Psoas muscle (tissue), 8 donors: ENCODE measurements at regions of chr10 and their contacts with region 1.

Region 1: DNA sequence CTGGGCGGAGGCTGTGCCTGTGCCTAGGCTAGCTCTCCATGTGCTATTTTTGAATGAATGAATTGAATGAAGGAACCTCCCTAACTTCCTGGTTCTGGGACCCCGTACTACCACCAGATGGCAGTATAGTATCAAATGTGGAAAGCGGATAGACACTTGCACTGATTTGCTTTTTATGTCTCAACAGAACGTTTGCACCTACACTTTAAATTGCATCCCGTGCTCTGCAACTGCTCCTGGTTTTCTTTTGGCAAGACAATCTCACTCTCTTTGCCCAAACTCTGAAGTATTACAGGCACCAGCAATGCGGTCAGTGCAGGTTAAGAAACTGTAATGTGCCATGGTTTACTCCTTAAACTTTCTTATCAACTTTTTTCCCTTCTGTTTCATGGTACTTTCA is 6.5 kb downstream of the FZD8 start:
- DNase-seq: no peak
- ATAC-seq: peak; percentile 66 to 85 (median 76)
- H3K4me3 ChIP-seq: no peak overlapping the region
- H3K27ac ChIP-seq: no peak overlapping the region
- H3K4me1 ChIP-seq: peaks cover 5% of the 10 kb centered on the region
- H3K27me3 ChIP-seq: no peaks in the 10 kb centered on the region
- CTCF ChIP-seq: peak; percentile 97

Region 2: DNA sequence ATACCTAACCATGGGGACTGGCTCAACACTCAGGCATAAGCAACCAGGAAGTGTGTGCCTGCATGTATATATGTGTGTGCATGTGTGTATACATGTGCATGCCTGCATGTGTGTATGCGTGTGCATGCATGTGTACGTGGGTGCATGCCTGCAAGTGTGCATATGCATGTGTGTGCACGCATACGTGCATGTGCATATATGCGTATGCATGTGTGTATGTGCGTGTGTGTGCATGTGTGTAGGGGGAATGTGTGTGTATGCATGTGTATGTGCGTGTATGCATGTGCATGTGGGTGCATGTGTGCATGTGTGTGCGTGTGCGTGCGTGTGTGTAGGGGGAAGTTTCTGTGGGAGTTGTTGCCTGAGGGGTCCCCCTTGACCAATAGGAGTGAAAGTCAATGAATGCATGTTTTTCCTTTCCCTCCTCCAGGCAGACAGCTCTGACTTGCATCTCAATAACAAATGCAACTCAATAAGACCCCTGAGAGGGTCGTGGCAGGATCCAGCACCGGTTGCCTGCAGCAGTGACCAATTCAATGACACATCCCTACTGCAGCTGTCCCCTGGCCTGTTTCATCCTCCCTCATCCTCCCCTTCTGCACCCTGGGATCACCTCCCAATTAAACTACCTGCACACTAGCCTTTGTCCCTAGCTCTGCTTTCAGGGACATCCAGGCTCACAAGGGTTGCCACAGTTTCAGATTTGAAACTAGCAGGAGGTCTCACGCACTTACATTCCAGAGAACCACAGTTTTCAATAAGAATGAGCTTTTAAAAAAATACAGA is 33.5 kb after region 1 on chr10:
- intact Hi-C with region 1: no loop called
- DNase-seq: no peak
- ATAC-seq: no peak
- H3K4me3 ChIP-seq: no peak overlapping the region
- H3K27ac ChIP-seq: no peak overlapping the region
- H3K4me1 ChIP-seq: no peaks in the 10 kb centered on the region
- H3K27me3 ChIP-seq: no peaks in the 10 kb centered on the region
- CTCF ChIP-seq: no peak

Region 3: GRCh38 chr10:36779234-36779846 is 1143.8 kb after region 1 on chr10:
- intact Hi-C with region 1: loop called (anchors 2 kb)
- DNase-seq: no peak
- ATAC-seq: peak; percentile 64 to 77 (median 68)
- H3K4me3 ChIP-seq: no peak overlapping the region
- H3K27ac ChIP-seq: no peak overlapping the region
- H3K4me1 ChIP-seq: no peaks in the 10 kb centered on the region
- H3K27me3 ChIP-seq: no peaks in the 10 kb centered on the region
- CTCF ChIP-seq: peak; percentile 70

Region 4: DNA sequence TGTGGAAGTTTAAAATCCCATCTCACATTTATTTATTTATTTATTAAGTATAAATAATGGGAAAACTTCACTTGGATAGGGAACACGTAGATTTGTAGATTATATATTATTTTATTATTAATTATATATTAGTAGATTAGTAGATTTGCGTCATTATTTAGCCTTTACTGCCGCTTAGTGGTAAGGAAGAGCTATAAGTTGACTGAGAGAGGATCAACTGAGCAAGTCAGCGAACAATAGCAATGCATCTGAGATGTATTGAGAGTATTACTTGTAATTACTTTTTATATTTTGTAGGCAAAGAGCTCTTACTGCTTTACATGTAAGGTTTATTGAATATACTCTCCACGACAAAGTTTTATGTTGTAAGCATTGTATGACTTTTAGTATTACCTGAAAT is 1245.3 kb after region 1 on chr10:
- intact Hi-C with region 1: loop called (anchors 5 to 10 kb)
- DNase-seq: no peak
- ATAC-seq: no peak
- H3K4me3 ChIP-seq: no peak overlapping the region
- H3K27ac ChIP-seq: no peak overlapping the region
- H3K4me1 ChIP-seq: no peaks in the 10 kb centered on the region
- H3K27me3 ChIP-seq: no peaks in the 10 kb centered on the region
- CTCF ChIP-seq: peak; percentile 37

Region 5: DNA sequence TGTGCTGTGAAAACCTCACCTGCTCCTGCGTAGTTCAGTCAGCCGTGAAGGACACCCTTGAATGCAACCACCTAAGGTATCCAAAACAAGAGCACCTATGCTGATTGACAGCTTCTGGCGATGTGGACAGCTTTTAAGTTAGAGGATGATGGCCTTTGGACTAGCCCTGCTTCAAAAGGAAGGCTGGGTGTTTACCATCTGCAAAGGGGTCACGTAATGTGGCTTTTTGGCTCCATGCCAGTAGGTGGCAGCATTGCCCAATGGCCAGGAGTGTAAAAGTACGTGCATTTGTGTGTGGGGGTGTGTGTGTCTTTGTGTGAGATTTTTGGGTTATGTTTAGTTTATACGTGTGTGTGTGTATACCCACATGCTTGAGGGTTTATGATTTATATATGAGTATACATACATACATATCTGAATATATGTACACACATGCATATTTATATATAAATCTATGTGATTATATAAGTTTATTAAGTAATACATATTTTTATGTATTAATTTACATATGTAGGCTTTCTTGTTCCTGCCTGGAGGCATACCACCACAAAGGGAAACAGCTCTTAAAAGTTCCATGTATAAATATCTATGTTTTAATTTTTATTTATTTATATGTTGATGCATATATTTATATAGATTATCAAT is 1253.5 kb after region 1 on chr10:
- intact Hi-C with region 1: loop called (anchors 5 to 10 kb)
- DNase-seq: no peak
- ATAC-seq: no peak
- H3K4me3 ChIP-seq: no peak overlapping the region
- H3K27ac ChIP-seq: no peak overlapping the region
- H3K4me1 ChIP-seq: no peaks in the 10 kb centered on the region
- H3K27me3 ChIP-seq: no peaks in the 10 kb centered on the region
- CTCF ChIP-seq: no peak